ENCODE measurements at regions of chr11 and their contacts with region 1.

Region 1: GRCh38 chr11:93020248-93021046 is 51.0 kb downstream of the MTNR1B start:
- DNase-seq: no peak
- H3K4me3 ChIP-seq: no peak overlapping the region
- H3K27ac ChIP-seq: no peak overlapping the region
- H3K4me1 ChIP-seq: no peaks in the 10 kb centered on the region
- H3K27me3 ChIP-seq: no peaks in the 10 kb centered on the region
- CTCF ChIP-seq: no peak
- EP300 ChIP-seq: no peak
- POLR2A ChIP-seq: no peak

Region 2: GRCh38 chr11:92969634-92970347 is 50.7 kb before region 1 on chr11 and contains the start of gene MTNR1B:
- intact Hi-C with region 1: loop called in 1 of 4 experiments (anchors 10 kb)
- DNase-seq: no peak
- H3K4me3 ChIP-seq: no peak within 1 kb of the TSS
- H3K27ac ChIP-seq: no peak within 1 kb of the TSS
- H3K4me1 ChIP-seq: no peaks in the 10 kb centered on the region
- H3K27me3 ChIP-seq: no peaks in the 10 kb centered on the region
- CTCF ChIP-seq: no peak
- EP300 ChIP-seq: no peak
- POLR2A ChIP-seq: no peak
- total RNA-seq, gene MTNR1B: not detected